ENCODE measurements at regions of chr16 and their contacts with region 1.

Region 1: DNA sequence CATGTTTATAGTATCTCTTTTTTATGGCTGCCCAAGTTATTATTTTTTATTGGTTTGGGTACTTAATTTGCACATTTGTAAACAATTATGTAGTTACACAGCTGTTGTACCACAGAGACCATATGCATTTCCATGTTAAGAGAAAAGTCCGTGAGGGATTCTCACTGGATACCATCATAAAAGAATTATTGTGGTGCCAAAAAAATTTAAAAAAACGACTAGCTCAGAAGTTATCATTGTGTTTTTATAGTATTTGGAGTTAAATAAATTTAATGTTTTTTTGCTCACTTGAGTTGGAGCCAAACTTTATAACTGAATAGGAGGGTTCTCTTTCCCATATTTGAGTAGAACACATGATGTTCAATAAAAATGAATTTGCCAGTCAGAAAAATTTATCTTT is 618.7 kb downstream of the WWOX start:
- DNase-seq: no peak
- H3K4me3 ChIP-seq: no peak overlapping the region
- H3K4me3 Mint-ChIP-seq: no peak overlapping the region
- H3K27ac ChIP-seq: no peak overlapping the region
- H3K27ac Mint-ChIP-seq: no peak overlapping the region
- H3K4me1 ChIP-seq: no peaks in the 10 kb centered on the region
- H3K4me1 Mint-ChIP-seq: peaks cover 0 to 3% (median under 1%) of the 10 kb centered on the region in 4 donors
- H3K27me3 ChIP-seq: no peaks in the 10 kb centered on the region
- H3K27me3 Mint-ChIP-seq: no peaks in the 10 kb centered on the region

Region 2: DNA sequence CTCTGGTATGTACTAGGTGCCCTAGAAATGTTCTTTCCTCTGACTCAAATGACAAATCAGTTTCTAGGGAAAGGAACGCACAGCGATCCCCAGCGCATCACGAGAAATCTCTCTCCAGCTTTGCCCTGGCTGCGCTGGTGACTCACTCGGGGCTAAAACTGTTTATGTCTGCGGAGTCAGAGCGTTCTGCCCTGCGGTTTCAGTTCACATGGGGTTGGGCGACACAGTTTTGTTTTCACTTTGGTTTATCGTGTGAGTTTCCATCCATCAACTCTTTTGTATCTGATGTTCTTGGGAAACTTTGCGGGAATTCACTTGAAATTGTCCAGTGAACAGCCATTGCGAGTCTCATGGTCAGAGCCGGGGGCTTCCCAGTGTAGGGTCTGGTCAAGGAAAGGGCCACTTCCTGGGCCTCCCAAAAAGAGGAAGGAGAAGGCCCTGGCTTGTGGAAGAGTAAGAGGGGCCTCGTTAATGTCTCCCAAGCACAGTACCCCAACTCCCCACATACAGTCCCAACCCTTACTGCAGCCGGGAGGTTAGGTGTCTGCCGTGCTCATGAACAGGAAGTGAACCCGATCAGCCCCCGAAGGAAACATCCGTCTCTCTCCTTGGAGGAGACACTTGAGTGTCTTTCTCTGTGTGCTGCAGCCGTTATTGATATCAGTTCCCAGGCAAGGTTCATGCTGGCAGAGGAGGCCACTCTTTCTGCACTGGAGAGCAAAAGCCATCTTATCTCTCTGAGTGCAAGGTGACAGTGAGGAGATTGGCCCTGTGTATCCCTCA is 24.6 kb after region 1 on chr16:
- CTCF ChIA-PET with region 1: no interaction called
- POLR2A ChIA-PET with region 1: interaction called, 3 read pairs
- intact Hi-C with region 1: loop called (anchors 2 kb)
- DNase-seq: peak; percentile 73 to 91 (median 80)
- H3K4me3 ChIP-seq: peak overlapping the region; percentile 64 to 82
- H3K4me3 Mint-ChIP-seq: peak overlapping the region; percentile 81 to 90 (median 88)
- H3K27ac ChIP-seq: peak overlapping the region; percentile 81
- H3K27ac Mint-ChIP-seq: peak overlapping the region; percentile 93 to 99 (median 98)
- H3K4me1 ChIP-seq: peaks cover 33% of the 10 kb centered on the region
- H3K4me1 Mint-ChIP-seq: peaks cover 26 to 48% (median 30%) of the 10 kb centered on the region in 4 donors
- H3K27me3 ChIP-seq: no peaks in the 10 kb centered on the region
- H3K27me3 Mint-ChIP-seq: no peaks in the 10 kb centered on the region